ENCODE measurements at regions of chr22 and their contacts with region 1.

Region 1: GRCh38 chr22:35552196-35552842 is 11.7 kb downstream of the RASD2 start:
- DNase-seq: peak; percentile 77 to 92 (median 82)
- ATAC-seq: peak; percentile 97
- H3K4me3 ChIP-seq: no peak overlapping the region
- H3K4me3 Mint-ChIP-seq: peak overlapping the region; percentile 40
- H3K27ac ChIP-seq: no peak overlapping the region
- H3K27ac Mint-ChIP-seq: peak overlapping the region; percentile 0
- H3K4me1 ChIP-seq: peaks cover 24% of the 10 kb centered on the region
- H3K4me1 Mint-ChIP-seq: peaks cover 17% of the 10 kb centered on the region
- H3K27me3 ChIP-seq: no peaks in the 10 kb centered on the region
- H3K27me3 Mint-ChIP-seq: no peaks in the 10 kb centered on the region
- CTCF ChIP-seq: no peak

Region 2: DNA sequence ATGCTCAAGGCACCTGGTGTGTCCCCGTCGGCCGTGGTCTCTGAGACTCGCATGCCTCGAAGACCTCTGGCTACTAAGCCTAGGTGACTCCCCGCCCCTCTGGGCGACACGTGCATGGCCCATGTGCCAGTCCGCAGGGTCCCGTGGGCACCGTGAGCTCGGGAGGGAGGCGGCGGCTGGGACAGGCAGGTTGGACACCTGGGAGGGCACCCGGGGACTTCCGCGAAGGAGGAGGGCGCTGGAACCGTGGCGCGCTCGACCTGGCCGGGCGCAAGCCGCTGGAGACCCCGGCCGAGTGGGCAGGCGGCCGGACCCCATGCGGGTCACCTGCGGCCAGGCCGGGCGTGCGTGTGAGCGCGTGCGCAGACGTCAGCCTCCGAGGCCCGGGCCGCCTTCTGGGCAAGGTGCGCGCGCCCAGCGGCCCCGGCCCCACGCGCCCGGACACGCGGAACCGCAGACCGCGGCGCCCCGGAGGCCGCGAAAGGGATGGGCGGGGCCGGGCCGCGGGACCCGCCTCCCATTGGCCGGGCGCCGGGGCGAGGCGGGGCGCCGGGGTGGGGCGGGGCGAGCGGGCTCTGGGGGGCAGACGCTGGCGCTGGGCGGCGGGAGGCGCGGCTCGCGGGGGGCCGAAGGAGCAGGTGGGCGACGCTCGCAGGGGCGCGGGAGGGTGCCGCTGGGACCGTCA is 12.3 kb before region 1 on chr22:
- CTCF ChIA-PET with region 1: no interaction called
- POLR2A ChIA-PET with region 1: interaction called, 8 read pairs
- intact Hi-C with region 1: loop called in 1 of 2 experiments (anchors 2 kb)
- DNase-seq: peak in 13 of 14 experiments; percentile 20 to 80 (median 59)
- ATAC-seq: peak; percentile 79
- H3K4me3 ChIP-seq: peak overlapping the region; percentile 60
- H3K4me3 Mint-ChIP-seq: peak overlapping the region; percentile 78
- H3K27ac ChIP-seq: no peak overlapping the region
- H3K27ac Mint-ChIP-seq: no peak overlapping the region
- H3K4me1 ChIP-seq: peaks cover 24% of the 10 kb centered on the region
- H3K4me1 Mint-ChIP-seq: peaks cover 5% of the 10 kb centered on the region
- H3K27me3 ChIP-seq: peaks cover 29 to 36% of the 10 kb centered on the region in 2 experiments
- H3K27me3 Mint-ChIP-seq: peaks cover 41% of the 10 kb centered on the region
- CTCF ChIP-seq: no peak